GM12878 (cell line): ENCODE measurements at regions of chr3 and their contacts with region 1.

Region 1: GRCh38 chr3:143119009-143119914 is at the start of gene CHST2:
- DNase-seq: no peak
- ATAC-seq: peak; percentile 86
- H3K4me3 ChIP-seq: peak within 1 kb of the TSS; percentile 94
- H3K27ac ChIP-seq: peak within 1 kb of the TSS; percentile 93
- H3K4me1 ChIP-seq: peaks cover 13% of the 10 kb centered on the region
- H3K27me3 ChIP-seq: no peaks in the 10 kb centered on the region
- CTCF ChIP-seq: no peak
- EP300 ChIP-seq: no peak
- POLR2A ChIP-seq: peak; percentile 63
- RAD21 ChIP-seq: no peak
- polyA plus RNA-seq, gene CHST2: 2.3 to 5.6 TPM

Region 2: DNA sequence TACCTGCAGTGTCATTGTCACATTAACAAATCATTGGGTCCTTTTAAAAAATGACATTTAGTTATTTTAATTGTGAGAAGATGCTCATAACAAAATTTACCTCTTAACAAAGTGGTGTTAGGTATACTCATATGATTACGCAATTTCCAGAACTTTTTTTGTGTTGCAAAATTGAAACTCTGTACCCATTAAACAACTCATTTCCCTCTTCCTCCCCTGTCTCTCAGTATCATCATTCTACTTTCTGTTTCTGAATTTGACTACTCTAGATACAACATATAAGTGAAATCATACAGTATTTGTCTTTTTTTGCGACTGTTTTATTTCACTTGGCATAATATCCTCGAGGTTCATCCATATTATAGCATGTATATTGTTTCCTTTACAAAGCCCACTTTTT is 58.4 kb before region 1 on chr3:
- CTCF ChIA-PET with region 1: no interaction called
- POLR2A ChIA-PET with region 1: no interaction called
- RAD21 ChIA-PET with region 1: no interaction called
- SMC1A ChIA-PET with region 1: no interaction called
- in situ Hi-C with region 1: no loop called
- intact Hi-C with region 1: loop called (anchors 2 kb)
- DNase-seq: peak; percentile 57
- ATAC-seq: peak; percentile 97
- H3K4me3 ChIP-seq: no peak overlapping the region
- H3K27ac ChIP-seq: peak overlapping the region; percentile 77
- H3K4me1 ChIP-seq: peaks cover 10% of the 10 kb centered on the region
- H3K27me3 ChIP-seq: no peaks in the 10 kb centered on the region
- CTCF ChIP-seq: no peak
- EP300 ChIP-seq: peak in 1 of 2 experiments; percentile 72; a peak in 1 of 4 replicates
- POLR2A ChIP-seq: no peak
- RAD21 ChIP-seq: no peak

Region 3: GRCh38 chr3:143171141-143171970 is 52.1 kb after region 1 on chr3:
- CTCF ChIA-PET with region 1: interaction called, 4 read pairs
- POLR2A ChIA-PET with region 1: no interaction called
- RAD21 ChIA-PET with region 1: interaction called, 14 read pairs
- SMC1A ChIA-PET with region 1: interaction called, 41 read pairs
- in situ Hi-C with region 1: no loop called
- intact Hi-C with region 1: loop called (anchors 5 kb)
- DNase-seq: peak; percentile 77
- ATAC-seq: peak; percentile 85
- H3K4me3 ChIP-seq: no peak overlapping the region
- H3K27ac ChIP-seq: peak overlapping the region; percentile 82
- H3K4me1 ChIP-seq: peaks cover 35% of the 10 kb centered on the region
- H3K27me3 ChIP-seq: no peaks in the 10 kb centered on the region
- CTCF ChIP-seq: peak in 1 of 3 experiments; percentile 5; a peak in 1 of 6 replicates
- EP300 ChIP-seq: no peak
- POLR2A ChIP-seq: no peak
- RAD21 ChIP-seq: peak; percentile 14; the same call in 1 of the 2 replicates

Region 4: GRCh38 chr3:143236226-143236964 is 117.1 kb after region 1 on chr3:
- CTCF ChIA-PET with region 1: no interaction called
- POLR2A ChIA-PET with region 1: interaction called, 4 read pairs
- RAD21 ChIA-PET with region 1: interaction called, 3 read pairs
- SMC1A ChIA-PET with region 1: no interaction called
- in situ Hi-C with region 1: no loop called
- intact Hi-C with region 1: loop called (anchors 2 kb)
- DNase-seq: peak; percentile 49
- ATAC-seq: peak; percentile 93
- H3K4me3 ChIP-seq: no peak overlapping the region
- H3K27ac ChIP-seq: peak overlapping the region; percentile 6; the same call in 1 of the 2 replicates
- H3K4me1 ChIP-seq: peaks cover 13% of the 10 kb centered on the region
- H3K27me3 ChIP-seq: no peaks in the 10 kb centered on the region
- CTCF ChIP-seq: no peak
- EP300 ChIP-seq: no peak
- POLR2A ChIP-seq: no peak
- RAD21 ChIP-seq: no peak

Region 5: GRCh38 chr3:143348486-143349327 is 229.4 kb after region 1 on chr3:
- CTCF ChIA-PET with region 1: interaction called, 6 read pairs
- POLR2A ChIA-PET with region 1: no interaction called
- RAD21 ChIA-PET with region 1: interaction called, 7 read pairs
- SMC1A ChIA-PET with region 1: interaction called, 5 read pairs
- in situ Hi-C with region 1: no loop called
- intact Hi-C with region 1: loop called (anchors 5 kb)
- DNase-seq: no peak
- ATAC-seq: peak; percentile 69
- H3K4me3 ChIP-seq: no peak overlapping the region
- H3K27ac ChIP-seq: no peak overlapping the region
- H3K4me1 ChIP-seq: peaks cover 5% of the 10 kb centered on the region
- H3K27me3 ChIP-seq: no peaks in the 10 kb centered on the region
- CTCF ChIP-seq: peak; percentile 34 to 39 (median 39); a peak in 4 of 6 replicates
- EP300 ChIP-seq: no peak
- POLR2A ChIP-seq: no peak
- RAD21 ChIP-seq: peak; percentile 48

Region 6: GRCh38 chr3:143433787-143434378 is 314.6 kb after region 1 on chr3:
- CTCF ChIA-PET with region 1: interaction called, 4 read pairs
- POLR2A ChIA-PET with region 1: no interaction called
- RAD21 ChIA-PET with region 1: no interaction called
- SMC1A ChIA-PET with region 1: interaction called, 3 read pairs
- in situ Hi-C with region 1: no loop called
- intact Hi-C with region 1: loop called (anchors 5 kb)
- DNase-seq: no peak
- ATAC-seq: peak; percentile 70
- H3K4me3 ChIP-seq: no peak overlapping the region
- H3K27ac ChIP-seq: no peak overlapping the region
- H3K4me1 ChIP-seq: no peaks in the 10 kb centered on the region
- H3K27me3 ChIP-seq: no peaks in the 10 kb centered on the region
- CTCF ChIP-seq: peak; percentile 61 to 67 (median 63); a peak in 5 of 6 replicates
- EP300 ChIP-seq: no peak
- POLR2A ChIP-seq: no peak
- RAD21 ChIP-seq: peak; percentile 72

Region 7: GRCh38 chr3:143644370-143645089 is 525.3 kb after region 1 on chr3:
- CTCF ChIA-PET with region 1: no interaction called
- POLR2A ChIA-PET with region 1: no interaction called
- RAD21 ChIA-PET with region 1: interaction called, 3 read pairs
- SMC1A ChIA-PET with region 1: interaction called, 3 read pairs
- in situ Hi-C with region 1: no loop called
- intact Hi-C with region 1: loop called (anchors 1 kb)
- DNase-seq: peak; percentile 26
- ATAC-seq: peak; percentile 76
- H3K4me3 ChIP-seq: no peak overlapping the region
- H3K27ac ChIP-seq: no peak overlapping the region
- H3K4me1 ChIP-seq: 0 out of 2 replicates have a peak, but pooled peaks cover 4% of the 10 kb centered on the region
- H3K27me3 ChIP-seq: no peaks in the 10 kb centered on the region
- CTCF ChIP-seq: peak; percentile 43 to 69 (median 51); a peak in 4 of 6 replicates
- EP300 ChIP-seq: no peak
- POLR2A ChIP-seq: no peak
- RAD21 ChIP-seq: peak; percentile 86